Activated T-helper 2 cell treated with anti-CD3 and anti-CD28 coated beads, Interferon-gamma antibody, Interleukin-2, Interleukin-4, amounts not matched to agents 10 μg/mL and 5 μg/mL and 100 μg/mL, durations not matched to agents 14 hours and 24 hours and 36 hours (primary cell): ENCODE measurements at regions of chr5 and their contacts with region 1.

Region 1: DNA sequence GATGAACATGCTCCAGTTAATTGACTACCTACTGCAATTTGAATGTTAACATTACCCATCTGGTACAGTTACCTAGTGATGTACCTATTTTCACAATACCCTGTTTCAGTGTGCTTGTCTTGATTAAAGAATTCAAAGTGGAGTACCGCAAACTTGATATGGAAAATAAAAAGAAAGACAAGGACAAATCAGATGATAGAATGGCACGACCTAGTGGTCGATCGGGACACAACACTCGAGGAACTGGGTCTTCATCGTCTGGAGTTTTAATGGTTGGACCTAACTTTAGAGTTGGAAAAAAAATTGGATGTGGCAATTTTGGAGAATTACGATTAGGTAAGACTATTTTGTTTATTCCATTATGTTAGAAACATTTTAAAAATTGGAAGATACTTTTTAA is 33.5 kb downstream of the CSNK1G3 start:
- DNase-seq: no peak
- H3K4me3 Mint-ChIP-seq: no peak overlapping the region
- H3K27ac Mint-ChIP-seq: no peak overlapping the region
- H3K4me1 Mint-ChIP-seq: peaks cover 36% of the 10 kb centered on the region
- H3K27me3 Mint-ChIP-seq: no peaks in the 10 kb centered on the region

Region 2: DNA sequence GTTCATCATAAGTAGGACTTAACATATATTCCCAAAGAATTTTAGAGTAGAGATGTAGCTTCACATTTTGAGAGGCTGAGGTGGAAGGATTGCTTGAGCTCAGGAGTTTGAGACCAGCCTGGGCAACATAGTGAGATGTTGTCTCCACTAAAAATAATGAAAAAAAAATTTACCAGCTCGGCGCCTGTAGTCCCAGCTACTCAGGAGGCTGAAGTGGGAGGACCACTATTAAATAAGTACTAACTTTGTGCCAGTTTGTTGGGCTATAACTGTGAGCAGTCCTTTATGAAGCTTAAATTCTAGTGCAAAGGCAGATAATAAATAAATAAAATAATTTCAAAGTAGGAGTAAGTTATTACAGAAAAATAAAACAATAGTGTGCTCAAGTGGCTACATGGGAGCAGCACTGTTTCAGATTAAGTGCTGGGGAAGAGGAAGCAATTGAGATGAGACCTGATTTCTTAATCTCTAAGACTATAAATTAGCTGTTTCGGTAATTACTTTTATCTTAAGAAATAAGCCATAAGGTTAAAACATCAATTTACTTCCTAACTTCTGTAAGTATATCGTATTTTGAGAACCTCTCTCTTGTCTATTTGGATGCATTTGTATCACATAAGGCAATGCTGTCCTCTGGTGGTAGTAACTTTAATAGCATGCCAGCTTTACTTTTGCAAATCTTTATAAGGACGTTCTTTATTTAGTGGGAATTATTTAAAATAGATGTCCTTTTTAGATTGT is 65.3 kb after region 1 on chr5:
- intact Hi-C with region 1: loop called (anchors 5 kb)
- DNase-seq: no peak
- H3K4me3 Mint-ChIP-seq: no peak overlapping the region
- H3K27ac Mint-ChIP-seq: peak overlapping the region; percentile 49
- H3K4me1 Mint-ChIP-seq: peaks cover 15% of the 10 kb centered on the region
- H3K27me3 Mint-ChIP-seq: no peaks in the 10 kb centered on the region

Region 3: DNA sequence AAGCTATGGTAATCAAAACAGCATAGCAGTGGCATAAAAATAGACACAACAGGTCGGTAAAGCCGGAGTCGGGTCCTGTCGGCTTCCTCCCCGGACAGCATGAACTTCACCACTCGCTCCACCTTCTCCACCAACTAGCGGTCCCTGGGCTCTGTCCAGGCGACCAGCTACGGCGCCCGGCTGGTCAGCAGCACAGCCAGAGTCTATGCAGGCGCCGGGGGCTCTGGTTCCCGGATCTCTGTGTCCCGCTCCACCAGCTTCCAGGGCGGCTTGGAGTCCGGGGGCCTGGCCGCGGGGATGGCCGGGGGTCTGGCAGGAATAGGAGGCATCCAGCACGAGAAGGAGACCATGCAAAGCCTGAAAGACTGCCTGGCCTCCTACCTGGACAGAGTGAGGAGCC is 90.5 kb after region 1 on chr5:
- intact Hi-C with region 1: no loop called
- DNase-seq: no peak
- H3K4me3 Mint-ChIP-seq: no peak overlapping the region
- H3K27ac Mint-ChIP-seq: no peak overlapping the region
- H3K4me1 Mint-ChIP-seq: no peaks in the 10 kb centered on the region
- H3K27me3 Mint-ChIP-seq: no peaks in the 10 kb centered on the region